SK-N-SH (cell line): ENCODE measurements at regions of chr7 and their contacts with region 1.

Region 1: DNA sequence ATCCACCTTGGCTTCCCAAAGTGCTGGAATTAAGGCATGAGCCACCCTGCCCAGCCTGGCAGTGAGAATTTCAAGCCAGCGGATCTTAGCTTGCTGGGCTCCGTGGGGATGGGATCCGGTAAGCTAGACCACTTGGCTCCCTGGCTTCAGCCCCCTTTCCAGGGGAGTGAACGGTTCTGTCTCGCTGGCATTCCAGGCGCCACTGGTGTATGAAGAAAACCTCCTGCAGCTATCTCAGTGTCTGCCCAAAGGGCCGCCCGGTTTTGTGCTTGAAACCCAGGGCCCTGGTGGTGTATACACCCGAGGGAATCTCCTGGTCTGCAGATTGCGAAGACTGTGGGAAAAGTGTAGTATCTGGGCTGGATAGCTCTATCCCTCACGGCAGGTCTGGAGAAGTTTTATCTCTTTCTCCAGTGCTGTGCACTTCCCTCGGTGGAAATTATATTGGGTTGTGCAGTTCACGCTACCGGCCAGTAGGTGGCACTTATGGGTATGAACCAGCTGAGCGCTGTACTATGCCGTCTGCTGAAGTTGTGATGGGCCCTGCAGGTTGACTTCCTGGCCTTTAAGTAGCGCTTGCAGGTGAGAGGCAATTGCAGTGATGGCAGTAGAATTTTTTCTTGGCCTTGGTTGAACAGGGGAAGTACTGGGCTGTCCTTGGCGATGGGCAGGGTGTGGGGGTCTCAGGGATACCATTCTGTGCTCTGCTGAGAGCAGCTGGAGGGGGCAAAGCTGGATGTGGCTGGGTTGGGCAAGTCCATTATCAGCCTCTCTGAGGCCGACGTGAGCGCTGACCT is 138.0 kb upstream of the MTPN start:
- DNase-seq: peak; percentile 60
- H3K4me3 ChIP-seq: no peak overlapping the region; a peak in 1 of 4 replicates
- H3K27ac ChIP-seq: no peak overlapping the region
- H3K4me1 ChIP-seq: no peaks in the 10 kb centered on the region; a peak in 1 of 4 replicates
- H3K27me3 ChIP-seq: no peaks in the 10 kb centered on the region
- CTCF ChIP-seq: peak; percentile 87
- EP300 ChIP-seq: no peak
- RAD21 ChIP-seq: peak; percentile 71

Region 2: DNA sequence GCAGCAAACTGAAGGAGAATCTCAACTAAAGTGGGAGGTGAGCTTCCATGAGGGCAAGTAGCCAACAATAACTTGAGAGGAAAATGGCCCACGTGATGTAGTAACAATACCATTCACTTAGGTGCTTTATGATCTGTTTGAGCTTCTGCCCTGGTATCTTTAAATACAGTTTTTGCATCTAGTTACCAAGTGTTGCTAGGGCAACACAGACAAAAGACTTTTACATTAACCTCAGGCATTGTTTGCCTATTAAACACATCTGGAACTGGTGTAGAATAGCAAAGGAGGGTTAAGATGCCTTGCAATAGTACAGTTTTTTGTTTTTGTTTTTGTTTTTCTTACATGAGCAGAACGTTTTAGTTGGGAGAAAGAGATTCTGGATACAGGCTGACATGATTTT is 40.3 kb before region 1 on chr7:
- CTCF ChIA-PET with region 1: interaction called, 10 read pairs
- POLR2A ChIA-PET with region 1: no interaction called
- DNase-seq: peak; percentile 31
- H3K4me3 ChIP-seq: no peak overlapping the region
- H3K27ac ChIP-seq: no peak overlapping the region
- H3K4me1 ChIP-seq: no peaks in the 10 kb centered on the region; a peak in 1 of 4 replicates
- H3K27me3 ChIP-seq: no peaks in the 10 kb centered on the region; the same call in 1 of the 2 replicates
- CTCF ChIP-seq: no peak
- EP300 ChIP-seq: no peak
- RAD21 ChIP-seq: no peak

Region 3: GRCh38 chr7:136104269-136104603 is 10.9 kb before region 1 on chr7:
- CTCF ChIA-PET with region 1: interaction called, 16 read pairs
- POLR2A ChIA-PET with region 1: no interaction called
- DNase-seq: no peak
- H3K4me3 ChIP-seq: no peak overlapping the region
- H3K27ac ChIP-seq: no peak overlapping the region
- H3K4me1 ChIP-seq: no peaks in the 10 kb centered on the region
- H3K27me3 ChIP-seq: no peaks in the 10 kb centered on the region
- CTCF ChIP-seq: no peak
- EP300 ChIP-seq: no peak
- RAD21 ChIP-seq: no peak

Region 4: DNA sequence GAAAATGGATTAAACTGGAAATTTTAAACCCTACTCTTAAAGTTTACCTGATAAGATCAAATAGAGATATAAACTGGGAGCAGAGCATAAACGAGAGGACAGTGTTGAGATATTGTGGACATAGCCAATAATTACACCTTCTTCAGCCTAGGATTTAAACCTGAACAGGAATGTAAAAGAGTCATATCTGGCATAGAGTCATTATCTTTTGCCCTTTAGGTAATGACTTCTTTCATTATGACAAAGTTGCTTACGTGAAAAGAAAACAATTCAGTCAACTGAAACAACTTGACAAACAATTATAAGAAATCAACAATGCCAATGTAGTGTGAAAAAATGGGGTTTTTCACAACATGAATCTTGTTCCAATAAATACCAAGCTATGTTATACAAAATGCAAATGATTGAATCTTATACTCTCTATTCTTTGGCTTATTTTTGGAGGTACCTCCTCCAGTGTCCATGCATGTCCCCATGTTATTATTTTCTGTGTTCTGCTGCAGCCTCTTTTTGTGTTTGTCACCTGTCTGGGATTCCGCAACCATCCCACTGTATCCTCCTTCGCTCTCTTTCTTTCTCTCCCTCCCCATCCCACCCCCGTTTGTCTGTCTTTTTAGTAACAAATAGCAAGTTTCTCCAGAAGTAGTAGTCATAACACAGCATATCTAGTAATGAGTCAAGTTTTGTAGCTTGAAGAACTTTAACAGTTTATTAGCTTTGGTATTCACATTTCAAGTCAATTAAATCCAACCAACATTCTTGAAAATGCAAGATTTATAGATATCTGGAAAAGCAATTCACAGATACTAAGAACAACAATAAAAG is 15.9 kb after region 1 on chr7:
- CTCF ChIA-PET with region 1: interaction called, 19 read pairs
- POLR2A ChIA-PET with region 1: no interaction called
- DNase-seq: no peak
- H3K4me3 ChIP-seq: no peak overlapping the region
- H3K27ac ChIP-seq: no peak overlapping the region
- H3K4me1 ChIP-seq: peaks cover 0 to 12% of the 10 kb centered on the region in 2 experiments; a peak in 1 of 4 replicates
- H3K27me3 ChIP-seq: no peaks in the 10 kb centered on the region
- CTCF ChIP-seq: no peak
- EP300 ChIP-seq: no peak
- RAD21 ChIP-seq: no peak

Region 5: DNA sequence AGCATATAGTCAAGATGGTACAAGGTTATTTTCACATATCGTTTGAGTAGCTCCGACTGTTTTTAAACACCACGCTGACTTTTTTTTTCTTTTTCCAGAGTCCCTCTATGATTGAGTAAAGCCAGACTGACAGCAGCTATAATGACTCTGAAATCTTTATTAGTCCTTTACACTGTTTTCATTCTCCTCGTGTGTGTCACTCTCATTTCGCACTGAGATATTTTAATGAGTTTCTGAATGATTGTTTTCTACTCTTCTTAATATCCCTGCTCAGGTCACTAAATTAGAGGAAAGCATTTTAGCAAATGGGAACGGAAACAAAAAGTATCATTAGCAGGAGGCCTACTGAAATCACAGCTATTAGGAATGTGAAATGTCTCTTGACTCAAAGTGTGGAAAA is 24.3 kb after region 1 on chr7:
- CTCF ChIA-PET with region 1: interaction called, 10 read pairs
- POLR2A ChIA-PET with region 1: no interaction called
- DNase-seq: no peak
- H3K4me3 ChIP-seq: no peak overlapping the region
- H3K27ac ChIP-seq: no peak overlapping the region
- H3K4me1 ChIP-seq: 0 out of 4 replicates have a peak, but pooled peaks cover 0 to 3% of the 10 kb centered on the region in 2 experiments
- H3K27me3 ChIP-seq: no peaks in the 10 kb centered on the region
- CTCF ChIP-seq: no peak
- EP300 ChIP-seq: no peak
- RAD21 ChIP-seq: no peak

Region 6: GRCh38 chr7:136184719-136185118 is 69.6 kb after region 1 on chr7:
- CTCF ChIA-PET with region 1: no interaction called
- POLR2A ChIA-PET with region 1: no interaction called
- DNase-seq: no peak
- H3K4me3 ChIP-seq: no peak overlapping the region
- H3K27ac ChIP-seq: no peak overlapping the region
- H3K4me1 ChIP-seq: peaks cover 0 to 5% of the 10 kb centered on the region in 2 experiments; a peak in 1 of 4 replicates
- H3K27me3 ChIP-seq: no peaks in the 10 kb centered on the region
- CTCF ChIP-seq: no peak
- EP300 ChIP-seq: no peak
- RAD21 ChIP-seq: no peak

Region 7: GRCh38 chr7:136210079-136210478 is 94.9 kb after region 1 on chr7:
- CTCF ChIA-PET with region 1: no interaction called
- POLR2A ChIA-PET with region 1: no interaction called
- DNase-seq: no peak
- H3K4me3 ChIP-seq: no peak overlapping the region
- H3K27ac ChIP-seq: no peak overlapping the region
- H3K4me1 ChIP-seq: no peaks in the 10 kb centered on the region; a peak in 1 of 4 replicates
- H3K27me3 ChIP-seq: no peaks in the 10 kb centered on the region
- CTCF ChIP-seq: no peak
- EP300 ChIP-seq: no peak
- RAD21 ChIP-seq: no peak

Region 8: GRCh38 chr7:136874238-136875032 is 759.3 kb after region 1 on chr7:
- CTCF ChIA-PET with region 1: interaction called, 17 read pairs
- POLR2A ChIA-PET with region 1: no interaction called
- DNase-seq: peak; percentile 72
- H3K4me3 ChIP-seq: no peak overlapping the region
- H3K27ac ChIP-seq: no peak overlapping the region
- H3K4me1 ChIP-seq: peaks cover 0 to 32% of the 10 kb centered on the region in 2 experiments; a peak in 2 of 4 replicates
- H3K27me3 ChIP-seq: peaks cover 29% of the 10 kb centered on the region
- CTCF ChIP-seq: peak; percentile 76
- EP300 ChIP-seq: no peak
- RAD21 ChIP-seq: peak; percentile 62